Colonic mucosa (tissue), 4 donors: ENCODE measurements at regions of chr7 and their contacts with region 1.

Region 1: DNA sequence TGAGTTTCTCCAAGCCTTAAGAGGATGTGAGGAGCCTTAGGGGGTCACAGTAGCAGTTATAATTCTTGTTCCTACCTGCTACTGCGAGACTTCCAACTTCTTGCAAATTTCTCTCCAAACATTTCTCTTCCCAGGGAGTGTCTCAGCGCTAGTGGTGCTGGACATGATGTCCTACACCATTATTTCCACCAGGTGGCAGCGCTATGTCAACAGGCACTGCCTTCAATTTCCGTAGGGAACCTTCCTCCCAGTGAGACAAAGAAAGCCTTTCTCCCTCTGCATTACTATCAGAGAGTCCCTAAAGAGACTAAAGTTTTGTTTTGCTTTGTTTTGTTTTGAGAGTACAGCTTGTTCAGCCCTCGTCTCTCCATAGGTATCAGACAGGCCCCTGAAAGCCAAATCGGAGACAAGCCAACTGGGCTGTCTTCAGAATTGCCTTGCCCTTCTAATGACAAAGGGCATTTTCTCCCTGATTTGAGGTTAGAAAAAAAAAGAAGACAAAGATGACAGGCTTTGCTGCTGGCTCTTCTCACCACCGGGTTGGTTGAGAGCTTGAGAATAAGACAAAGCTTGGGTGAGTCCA is 44.2 kb upstream of the GGCT start:
- DNase-seq: peak; percentile 83
- H3K4me3 ChIP-seq: no peak overlapping the region
- H3K27ac ChIP-seq: no peak overlapping the region
- H3K4me1 ChIP-seq: peaks cover 3% of the 10 kb centered on the region
- H3K27me3 ChIP-seq: no peaks in the 10 kb centered on the region
- CTCF ChIP-seq: peak; percentile 87

Region 2: GRCh38 chr7:30510124-30511075 is 38.5 kb before region 1 on chr7:
- intact Hi-C with region 1: loop called (anchors 5 kb)
- DNase-seq: peak; percentile 44
- H3K4me3 ChIP-seq: no peak overlapping the region
- H3K27ac ChIP-seq: no peak overlapping the region
- H3K4me1 ChIP-seq: no peaks in the 10 kb centered on the region
- H3K27me3 ChIP-seq: no peaks in the 10 kb centered on the region
- CTCF ChIP-seq: peak; percentile 82